ENCODE measurements at regions of chr7 and their contacts with region 1.

Region 1: DNA sequence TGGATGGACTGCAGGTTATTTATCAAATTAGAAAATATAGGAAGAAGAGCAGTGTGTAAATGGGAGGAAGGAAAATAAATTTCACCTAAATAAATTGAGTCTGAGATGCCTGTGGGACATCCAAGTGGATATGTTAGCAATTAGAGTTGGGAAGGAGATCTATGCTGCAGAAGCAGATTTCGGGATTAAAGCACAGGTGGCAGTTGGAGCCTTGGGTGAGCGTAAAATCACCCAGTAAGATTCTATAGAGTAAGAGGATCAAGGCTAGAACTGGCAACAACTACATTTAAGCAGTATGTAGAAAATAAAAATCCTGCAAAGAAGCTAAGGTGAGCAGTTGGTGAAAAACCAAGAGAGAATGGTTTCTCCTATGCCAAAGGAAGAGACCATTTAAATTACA is 8.4 kb downstream of the TRIM4 start:
- DNase-seq: no peak
- ATAC-seq: no peak
- H3K4me3 ChIP-seq: no peak overlapping the region
- H3K4me3 Mint-ChIP-seq: peak overlapping the region in 4 of 10 donors; percentile 17 to 49 (median 35)
- H3K27ac ChIP-seq: no peak overlapping the region
- H3K27ac Mint-ChIP-seq: peak overlapping the region in 3 of 9 donors; percentile 28 to 71 (median 64)
- H3K4me1 ChIP-seq: peaks cover 6 to 13% of the 10 kb centered on the region in 2 donors
- H3K4me1 Mint-ChIP-seq: peaks cover 22 to 82% (median 68%) of the 10 kb centered on the region in 7 donors
- H3K27me3 ChIP-seq: no peaks in the 10 kb centered on the region
- H3K27me3 Mint-ChIP-seq: no peaks in the 10 kb centered on the region

Region 2: GRCh38 chr7:99928994-99929729 is 18.2 kb after region 1 on chr7 and contains the start of gene GJC3:
- CTCF ChIA-PET with region 1: interaction called, 13 read pairs
- POLR2A ChIA-PET with region 1: interaction called, 4 read pairs
- intact Hi-C with region 1: loop called in 1 of 2 experiments (anchors 1 kb)
- DNase-seq: peak in 8 of 9 donors; percentile 27 to 61 (median 52)
- ATAC-seq: peak; percentile 90
- H3K4me3 ChIP-seq: peak within 1 kb of the TSS; percentile 27
- H3K4me3 Mint-ChIP-seq: peak within 1 kb of the TSS; percentile 80 to 87 (median 84)
- H3K27ac ChIP-seq: peak within 1 kb of the TSS; percentile 29
- H3K27ac Mint-ChIP-seq: peak within 1 kb of the TSS; percentile 48 to 93 (median 85)
- H3K4me1 ChIP-seq: peaks cover 0 to 16% of the 10 kb centered on the region in 2 donors
- H3K4me1 Mint-ChIP-seq: peaks cover 17 to 33% (median 33%) of the 10 kb centered on the region in 7 donors
- H3K27me3 ChIP-seq: no peaks in the 10 kb centered on the region
- H3K27me3 Mint-ChIP-seq: peaks cover 0 to 44% (median 14%) of the 10 kb centered on the region in 5 donors
- total RNA-seq, gene GJC3: 0.41 to 1.1 (median 0.58) TPM in 4 of 5 experiments, not detected in the other

Region 3: GRCh38 chr7:99949638-99950228 is 38.8 kb after region 1 on chr7:
- CTCF ChIA-PET with region 1: interaction called, 19 read pairs
- POLR2A ChIA-PET with region 1: interaction called, 7 read pairs
- intact Hi-C with region 1: loop called (anchors 1 kb)
- DNase-seq: peak in 5 of 9 donors; percentile 17 to 38 (median 28)
- ATAC-seq: no peak
- H3K4me3 ChIP-seq: no peak overlapping the region
- H3K4me3 Mint-ChIP-seq: no peak overlapping the region
- H3K27ac ChIP-seq: no peak overlapping the region
- H3K27ac Mint-ChIP-seq: no peak overlapping the region
- H3K4me1 ChIP-seq: no peaks in the 10 kb centered on the region
- H3K4me1 Mint-ChIP-seq: peaks cover 0 to 10% (median under 1%) of the 10 kb centered on the region in 7 donors
- H3K27me3 ChIP-seq: no peaks in the 10 kb centered on the region
- H3K27me3 Mint-ChIP-seq: peaks cover 0 to 14% (median 0%) of the 10 kb centered on the region in 5 donors

Region 4: GRCh38 chr7:100049441-100050311 is 138.7 kb after region 1 on chr7 and contains the start of gene ZSCAN21:
- CTCF ChIA-PET with region 1: interaction called, 4 read pairs
- POLR2A ChIA-PET with region 1: no interaction called
- intact Hi-C with region 1: loop called (anchors 1 to 5 kb)
- DNase-seq: peak; percentile 70 to 89 (median 78)
- ATAC-seq: peak; percentile 94
- H3K4me3 ChIP-seq: peak within 1 kb of the TSS; percentile 92
- H3K4me3 Mint-ChIP-seq: peak within 1 kb of the TSS; percentile 86 to 95 (median 92)
- H3K27ac ChIP-seq: peak within 1 kb of the TSS; percentile 95
- H3K27ac Mint-ChIP-seq: peak within 1 kb of the TSS; percentile 81 to 98 (median 97)
- H3K4me1 ChIP-seq: peaks cover 0 to 6% of the 10 kb centered on the region in 2 donors
- H3K4me1 Mint-ChIP-seq: peaks cover 4 to 29% (median 25%) of the 10 kb centered on the region in 7 donors
- H3K27me3 ChIP-seq: no peaks in the 10 kb centered on the region
- H3K27me3 Mint-ChIP-seq: peaks cover 0 to 3% (median 0%) of the 10 kb centered on the region in 5 donors
- total RNA-seq, gene ZSCAN21: 3.9 to 10.1 (median 6.2) TPM

Measured in naive thymus-derived CD4-positive, alpha-beta T cell (primary cell).